ENCODE measurements at regions of chr1 and their contacts with region 1.

Region 1: GRCh38 chr1:53326088-53326597 is 1.7 kb downstream of the LRP8 start:
- DNase-seq: peak; percentile 95
- ATAC-seq: peak; percentile 96

Region 2: GRCh38 chr1:53266106-53266505 is 60.0 kb before region 1 on chr1:
- intact Hi-C with region 1: no loop called
- DNase-seq: no peak
- ATAC-seq: no peak

Region 3: GRCh38 chr1:53376041-53376461 is 49.9 kb after region 1 on chr1:
- intact Hi-C with region 1: loop called (anchors 5 kb)
- DNase-seq: no peak
- ATAC-seq: no peak

Region 4: GRCh38 chr1:54812801-54813484 is 1486.8 kb after region 1 on chr1:
- intact Hi-C with region 1: no loop called
- DNase-seq: no peak
- ATAC-seq: no peak